CD4-positive, alpha-beta T cell (primary cell): ENCODE measurements at regions of chr15 and their contacts with region 1.

Region 1: DNA sequence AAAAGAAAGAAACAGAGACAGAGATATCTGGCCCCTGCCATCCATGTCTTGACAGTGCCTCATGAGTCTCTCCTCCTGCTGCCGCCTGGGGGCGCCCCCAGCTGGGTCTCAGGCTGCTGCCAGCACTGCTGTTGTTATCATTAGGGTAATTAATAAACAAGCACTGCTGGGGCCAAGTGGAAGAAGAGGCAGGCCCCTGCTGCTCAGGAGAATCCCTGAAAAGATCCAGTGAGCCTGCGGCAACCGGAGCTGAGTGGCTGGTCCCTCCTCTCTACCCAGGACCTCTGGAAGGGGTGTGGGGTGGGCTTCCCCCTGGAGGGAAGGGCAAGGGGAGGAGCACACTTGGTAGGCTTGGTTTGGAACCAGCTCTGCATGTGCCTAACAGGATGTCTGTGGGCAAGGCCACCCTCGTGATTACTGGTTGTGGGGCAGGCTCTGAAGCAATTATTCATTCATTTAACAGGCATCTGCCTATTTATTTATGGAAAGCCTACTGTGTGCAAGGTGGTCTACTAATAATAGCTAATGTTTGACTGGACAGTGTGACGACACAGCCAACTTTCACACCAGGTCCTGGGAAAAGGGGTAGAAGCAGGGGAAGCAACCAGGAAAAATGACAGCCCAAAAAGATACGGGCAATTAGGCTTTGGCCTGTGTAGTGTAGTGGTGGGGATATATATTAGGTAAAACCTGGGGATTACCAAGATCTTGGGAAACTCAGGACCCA is 1.2 kb upstream of the TYRO3 start:
- DNase-seq: peak; percentile 52 to 89 (median 70)
- ATAC-seq: peak; percentile 87
- H3K4me3 ChIP-seq: no peak overlapping the region
- H3K4me3 Mint-ChIP-seq: peak overlapping the region; percentile 90
- H3K27ac ChIP-seq: peak overlapping the region in 1 of 2 donors; percentile 0
- H3K27ac Mint-ChIP-seq: peak overlapping the region; percentile 73
- H3K4me1 ChIP-seq: peaks cover 26% of the 10 kb centered on the region
- H3K4me1 Mint-ChIP-seq: peaks cover 31% of the 10 kb centered on the region
- H3K27me3 ChIP-seq: peaks cover 6 to 8% of the 10 kb centered on the region in 2 experiments
- H3K27me3 Mint-ChIP-seq: peaks cover 20% of the 10 kb centered on the region
- CTCF ChIP-seq: peak; percentile 89

Region 2: DNA sequence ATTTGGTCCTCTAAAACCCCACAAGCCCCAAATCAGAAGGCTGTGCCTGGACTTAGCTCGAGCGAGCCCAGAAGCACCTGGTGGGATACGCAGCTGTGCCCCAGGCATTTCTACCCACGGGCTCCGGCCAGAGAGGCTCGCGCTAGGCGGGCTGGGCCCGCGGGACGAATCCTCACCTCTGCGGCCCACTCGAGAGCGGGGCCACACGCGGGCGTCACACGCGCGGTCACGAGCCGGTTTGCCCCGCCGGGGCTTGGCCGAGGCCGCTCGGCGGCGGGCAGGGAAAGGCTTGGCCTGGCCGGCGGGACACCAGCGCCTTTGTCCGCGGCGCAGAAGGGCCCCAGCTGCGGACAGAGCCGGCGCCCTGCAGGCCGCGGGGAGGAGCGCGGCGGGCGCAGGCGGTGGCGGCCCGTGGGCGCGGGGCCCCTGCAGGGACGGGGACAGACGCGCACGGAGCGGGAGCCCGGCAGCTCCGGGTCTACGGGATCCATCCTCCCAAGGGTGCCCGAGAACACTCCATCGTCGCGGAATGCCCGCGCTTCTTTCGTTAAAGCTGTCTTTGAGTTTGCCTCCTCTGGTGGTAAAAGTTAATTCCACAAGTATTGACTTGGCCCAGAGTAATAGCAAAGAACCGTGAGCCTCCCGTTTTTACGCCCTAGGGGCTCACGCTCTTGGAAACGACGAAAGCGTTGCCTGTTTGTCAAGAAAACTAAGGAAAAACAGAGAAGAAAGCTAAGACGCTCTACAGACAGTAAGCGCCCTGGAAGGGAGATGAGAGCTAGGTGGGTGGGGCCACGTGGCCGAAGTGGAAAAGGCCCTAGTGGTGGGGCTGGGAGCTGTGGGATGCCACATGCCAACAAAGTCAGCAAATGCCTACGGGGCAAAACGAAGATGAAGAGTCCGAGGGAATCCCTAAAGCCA is 27.6 kb after region 1 on chr15:
- CTCF ChIA-PET with region 1: interaction called, 10 read pairs
- POLR2A ChIA-PET with region 1: no interaction called
- intact Hi-C with region 1: no loop called
- DNase-seq: peak in 8 of 14 experiments; percentile 3 to 52 (median 20)
- ATAC-seq: peak; percentile 73
- H3K4me3 ChIP-seq: peak overlapping the region; percentile 34
- H3K4me3 Mint-ChIP-seq: peak overlapping the region; percentile 76
- H3K27ac ChIP-seq: no peak overlapping the region
- H3K27ac Mint-ChIP-seq: no peak overlapping the region
- H3K4me1 ChIP-seq: peaks cover 9% of the 10 kb centered on the region
- H3K4me1 Mint-ChIP-seq: peaks cover 10% of the 10 kb centered on the region
- H3K27me3 ChIP-seq: peaks cover 14 to 22% of the 10 kb centered on the region in 2 experiments
- H3K27me3 Mint-ChIP-seq: peaks cover 56% of the 10 kb centered on the region
- CTCF ChIP-seq: no peak

Region 3: GRCh38 chr15:41621200-41622193 is 63.7 kb after region 1 on chr15:
- CTCF ChIA-PET with region 1: no interaction called
- POLR2A ChIA-PET with region 1: interaction called, 4 read pairs
- intact Hi-C with region 1: loop called in 1 of 2 experiments (anchors 5 kb)
- DNase-seq: peak; percentile 46 to 92 (median 70)
- ATAC-seq: peak; percentile 75
- H3K4me3 ChIP-seq: peak overlapping the region; percentile 64
- H3K4me3 Mint-ChIP-seq: peak overlapping the region; percentile 69
- H3K27ac ChIP-seq: no peak overlapping the region
- H3K27ac Mint-ChIP-seq: peak overlapping the region; percentile 73
- H3K4me1 ChIP-seq: peaks cover 19% of the 10 kb centered on the region
- H3K4me1 Mint-ChIP-seq: peaks cover 32% of the 10 kb centered on the region
- H3K27me3 ChIP-seq: no peaks in the 10 kb centered on the region
- H3K27me3 Mint-ChIP-seq: no peaks in the 10 kb centered on the region
- CTCF ChIP-seq: no peak

Region 4: GRCh38 chr15:41774062-41774881 is 216.4 kb after region 1 on chr15 and contains the start of gene MAPKBP1:
- CTCF ChIA-PET with region 1: interaction called, 11 read pairs
- POLR2A ChIA-PET with region 1: no interaction called
- intact Hi-C with region 1: loop called (anchors 1 to 5 kb)
- DNase-seq: peak; percentile 92 to 99 (median 97)
- ATAC-seq: peak; percentile 88
- H3K4me3 ChIP-seq: peak within 1 kb of the TSS; percentile 89
- H3K4me3 Mint-ChIP-seq: peak within 1 kb of the TSS; percentile 96
- H3K27ac ChIP-seq: peak within 1 kb of the TSS; percentile 57 to 72
- H3K27ac Mint-ChIP-seq: peak within 1 kb of the TSS; percentile 83
- H3K4me1 ChIP-seq: peaks cover 46% of the 10 kb centered on the region
- H3K4me1 Mint-ChIP-seq: peaks cover 65% of the 10 kb centered on the region
- H3K27me3 ChIP-seq: no peaks in the 10 kb centered on the region
- H3K27me3 Mint-ChIP-seq: no peaks in the 10 kb centered on the region
- CTCF ChIP-seq: peak; percentile 70
- total RNA-seq, gene MAPKBP1: 26.0 to 30.0 TPM

Region 5: DNA sequence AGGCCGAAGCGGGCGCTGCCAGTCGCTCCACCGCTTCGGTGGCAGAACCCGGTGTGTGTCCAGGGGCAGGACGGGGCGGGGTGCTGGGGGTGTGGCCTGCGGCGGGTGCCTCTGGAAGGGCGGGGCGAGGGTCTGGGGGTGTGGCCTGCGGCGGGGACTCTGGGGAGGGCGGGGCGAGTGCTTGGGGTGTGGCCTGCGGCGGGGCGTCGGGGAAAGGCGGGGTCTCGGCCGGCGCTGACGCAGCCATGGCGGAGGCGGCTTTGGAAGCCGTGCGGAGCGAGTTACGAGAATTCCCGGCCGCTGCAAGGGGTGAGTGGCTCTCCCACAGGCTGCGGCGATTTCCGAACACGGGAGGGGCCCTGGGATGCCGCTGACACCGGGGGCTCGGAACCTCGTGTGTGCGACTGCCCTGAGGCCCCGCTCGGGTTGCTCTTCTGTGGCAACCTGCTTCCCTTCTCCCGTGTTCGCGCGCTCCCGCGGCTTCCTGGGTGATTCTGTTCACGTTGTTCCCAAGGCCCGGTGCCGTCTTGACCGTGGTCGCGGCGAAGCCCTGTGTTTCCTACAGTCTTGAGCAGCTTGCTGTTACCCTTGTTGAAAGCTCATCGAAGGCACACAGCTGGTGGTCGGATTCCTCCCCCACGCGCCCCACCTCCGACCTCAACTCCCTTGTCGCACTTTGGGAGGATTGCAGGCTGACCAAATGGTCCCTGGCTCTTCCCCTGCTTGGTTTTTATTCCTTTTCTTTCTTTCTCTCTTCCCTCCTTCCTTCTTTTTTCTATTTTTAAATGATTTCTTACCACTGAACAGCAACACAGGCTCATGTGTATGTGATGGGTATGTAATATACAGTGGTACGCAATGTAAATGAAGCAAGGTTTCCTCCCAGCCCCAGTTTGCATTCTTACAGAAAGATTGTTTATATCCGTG is 270.3 kb after region 1 on chr15 and contains the start of gene JMJD7:
- CTCF ChIA-PET with region 1: no interaction called
- POLR2A ChIA-PET with region 1: no interaction called
- intact Hi-C with region 1: loop called in 1 of 2 experiments (anchors 5 kb)
- DNase-seq: peak; percentile 92 to 99 (median 96)
- ATAC-seq: peak; percentile 94
- H3K4me3 ChIP-seq: peak within 1 kb of the TSS; percentile 92
- H3K4me3 Mint-ChIP-seq: peak within 1 kb of the TSS; percentile 90
- H3K27ac ChIP-seq: peak within 1 kb of the TSS; percentile 53 to 64
- H3K27ac Mint-ChIP-seq: peak within 1 kb of the TSS; percentile 87
- H3K4me1 ChIP-seq: peaks cover 52% of the 10 kb centered on the region
- H3K4me1 Mint-ChIP-seq: peaks cover 30% of the 10 kb centered on the region
- H3K27me3 ChIP-seq: no peaks in the 10 kb centered on the region
- H3K27me3 Mint-ChIP-seq: no peaks in the 10 kb centered on the region
- CTCF ChIP-seq: no peak
- total RNA-seq, gene JMJD7: 35.6 to 38.4 TPM

Region 6: DNA sequence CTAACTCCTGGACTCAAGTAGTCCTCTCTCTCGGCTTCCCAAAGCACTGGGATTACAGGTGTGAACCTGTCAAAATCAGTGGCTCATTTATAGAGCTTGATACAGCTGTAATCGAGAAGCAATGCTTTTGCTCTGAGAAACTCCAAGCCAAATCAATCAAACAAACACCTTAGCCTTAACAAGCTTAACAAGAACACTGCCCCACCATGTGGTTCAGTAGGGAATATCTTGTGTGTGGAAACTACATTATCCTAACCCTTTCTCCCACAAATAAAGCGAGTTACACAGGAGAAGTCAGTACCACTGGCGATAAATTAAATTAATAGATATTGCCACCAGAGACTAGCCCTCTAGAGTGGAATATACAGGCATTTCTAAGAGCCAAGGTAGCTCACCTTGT is 1165.2 kb after region 1 on chr15:
- CTCF ChIA-PET with region 1: no interaction called
- POLR2A ChIA-PET with region 1: no interaction called
- intact Hi-C with region 1: no loop called
- DNase-seq: no peak
- ATAC-seq: no peak
- H3K4me3 ChIP-seq: no peak overlapping the region
- H3K4me3 Mint-ChIP-seq: no peak overlapping the region
- H3K27ac ChIP-seq: no peak overlapping the region
- H3K27ac Mint-ChIP-seq: no peak overlapping the region
- H3K4me1 ChIP-seq: no peaks in the 10 kb centered on the region
- H3K4me1 Mint-ChIP-seq: no peaks in the 10 kb centered on the region
- H3K27me3 ChIP-seq: no peaks in the 10 kb centered on the region
- H3K27me3 Mint-ChIP-seq: no peaks in the 10 kb centered on the region
- CTCF ChIP-seq: no peak